BJ (cell line): ENCODE measurements at regions of chr13 and their contacts with region 1.

Region 1: GRCh38 chr13:99176309-99177276 is 24.1 kb upstream of the UBAC2 start:
- DNase-seq: no peak
- H3K4me3 ChIP-seq: no peak overlapping the region
- H3K27me3 ChIP-seq: peaks cover 4% of the 10 kb centered on the region
- CTCF ChIP-seq: peak; percentile 95

Region 2: DNA sequence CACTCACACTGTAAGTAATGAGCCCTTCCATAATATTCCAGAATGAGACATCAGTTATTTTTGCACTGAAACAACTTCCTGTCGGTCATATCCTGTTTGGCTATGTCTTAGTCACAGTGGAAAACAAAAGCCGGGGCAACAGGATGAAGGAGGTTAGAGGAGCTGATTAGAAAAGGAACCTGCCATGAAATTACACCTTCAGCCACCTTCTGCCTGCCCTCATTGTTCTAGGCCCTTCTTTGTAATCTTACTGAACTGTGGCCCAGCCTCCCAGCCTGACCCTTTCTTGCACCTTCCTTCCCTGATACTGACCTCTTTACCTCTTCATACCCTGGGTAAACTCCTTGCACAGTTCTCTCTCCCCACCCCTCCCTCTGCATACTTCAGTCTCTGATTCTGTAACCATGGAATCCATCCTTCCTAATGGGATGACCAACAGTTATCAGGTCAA is 266.1 kb before region 1 on chr13:
- CTCF ChIA-PET with region 1: no interaction called
- POLR2A ChIA-PET with region 1: no interaction called
- DNase-seq: no peak
- H3K4me3 ChIP-seq: no peak overlapping the region
- H3K27me3 ChIP-seq: no peaks in the 10 kb centered on the region
- CTCF ChIP-seq: no peak

Region 3: GRCh38 chr13:99103536-99103935 is 73.1 kb before region 1 on chr13:
- CTCF ChIA-PET with region 1: no interaction called
- POLR2A ChIA-PET with region 1: no interaction called
- DNase-seq: no peak
- H3K4me3 ChIP-seq: no peak overlapping the region
- H3K27me3 ChIP-seq: peaks cover 5% of the 10 kb centered on the region; the same call in 1 of the 2 replicates
- CTCF ChIP-seq: no peak

Region 4: DNA sequence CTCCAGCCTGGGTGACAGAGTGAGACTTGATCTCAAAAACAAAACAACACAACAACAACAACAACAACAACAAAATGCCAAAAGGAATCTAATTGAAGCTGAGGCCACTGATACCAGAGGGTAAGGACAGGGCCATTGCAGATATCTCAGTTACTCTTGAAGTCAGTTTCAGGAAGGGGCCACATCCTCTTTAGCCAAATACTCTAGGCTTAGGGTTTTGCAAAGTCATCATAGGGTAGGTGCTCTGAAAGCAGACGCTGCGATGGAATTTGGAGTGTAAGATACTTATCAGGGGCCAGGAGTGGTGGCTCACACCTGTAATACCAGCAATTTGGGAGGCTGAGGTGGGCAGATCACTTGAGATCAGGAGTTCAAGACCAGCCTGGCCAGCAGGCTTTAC is 22.5 kb before region 1 on chr13:
- CTCF ChIA-PET with region 1: interaction called, 15 read pairs
- POLR2A ChIA-PET with region 1: no interaction called
- DNase-seq: no peak
- H3K4me3 ChIP-seq: no peak overlapping the region
- H3K27me3 ChIP-seq: 0 out of 2 replicates have a peak, but pooled peaks cover 3% of the 10 kb centered on the region
- CTCF ChIP-seq: no peak

Region 5: GRCh38 chr13:99165753-99166587 is 10.6 kb before region 1 on chr13:
- CTCF ChIA-PET with region 1: interaction called, 16 read pairs
- POLR2A ChIA-PET with region 1: no interaction called
- DNase-seq: no peak
- H3K4me3 ChIP-seq: no peak overlapping the region
- H3K27me3 ChIP-seq: peaks cover 4% of the 10 kb centered on the region; the same call in 1 of the 2 replicates
- CTCF ChIP-seq: no peak

Region 6: DNA sequence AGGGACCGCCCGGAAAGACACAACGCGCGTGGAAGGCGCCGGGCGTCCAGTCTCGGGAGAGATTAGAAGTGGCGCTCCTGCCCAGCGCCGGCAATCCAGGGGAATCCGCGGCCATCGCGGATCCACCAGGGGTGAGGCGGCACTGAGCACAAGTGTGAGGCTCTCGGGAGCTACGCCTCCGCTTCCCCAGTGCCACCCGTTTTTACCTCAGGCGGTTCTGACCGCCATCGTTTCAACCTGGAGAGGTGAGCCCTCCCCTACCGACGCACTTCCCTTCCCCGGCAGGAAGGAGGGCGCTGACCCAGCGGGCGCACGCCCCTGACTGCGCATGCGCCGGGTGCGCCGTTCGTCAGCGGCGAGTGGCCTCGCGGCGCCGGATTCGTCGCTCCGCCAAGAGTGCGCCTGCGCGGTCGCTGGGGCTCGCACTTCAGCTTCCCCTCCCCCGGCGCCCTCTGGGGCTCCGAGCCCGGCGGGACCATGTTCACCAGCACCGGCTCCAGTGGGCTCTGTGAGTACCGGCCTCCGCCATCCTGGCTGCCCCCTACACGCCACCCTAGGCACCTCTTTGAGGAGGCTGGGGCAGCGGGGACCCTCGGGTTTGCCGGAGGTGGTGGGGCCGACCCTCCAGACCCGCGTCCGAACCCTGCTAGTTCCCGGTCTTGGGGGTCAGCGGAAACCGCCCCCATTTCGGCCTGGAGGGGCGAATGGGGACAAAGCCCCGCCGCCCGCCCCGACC is 24.0 kb after region 1 on chr13 and contains the start of gene UBAC2:
- CTCF ChIA-PET with region 1: interaction called, 20 read pairs
- POLR2A ChIA-PET with region 1: no interaction called
- DNase-seq: peak; percentile 57
- H3K4me3 ChIP-seq: peak within 1 kb of the TSS; percentile 97
- H3K27me3 ChIP-seq: no peaks in the 10 kb centered on the region
- CTCF ChIP-seq: 0 out of 2 replicates have a peak, but pooled peaks have one; percentile 21
- polyA plus RNA-seq, gene UBAC2: 84.7 and 87.8 TPM in 2 replicates

Region 7: DNA sequence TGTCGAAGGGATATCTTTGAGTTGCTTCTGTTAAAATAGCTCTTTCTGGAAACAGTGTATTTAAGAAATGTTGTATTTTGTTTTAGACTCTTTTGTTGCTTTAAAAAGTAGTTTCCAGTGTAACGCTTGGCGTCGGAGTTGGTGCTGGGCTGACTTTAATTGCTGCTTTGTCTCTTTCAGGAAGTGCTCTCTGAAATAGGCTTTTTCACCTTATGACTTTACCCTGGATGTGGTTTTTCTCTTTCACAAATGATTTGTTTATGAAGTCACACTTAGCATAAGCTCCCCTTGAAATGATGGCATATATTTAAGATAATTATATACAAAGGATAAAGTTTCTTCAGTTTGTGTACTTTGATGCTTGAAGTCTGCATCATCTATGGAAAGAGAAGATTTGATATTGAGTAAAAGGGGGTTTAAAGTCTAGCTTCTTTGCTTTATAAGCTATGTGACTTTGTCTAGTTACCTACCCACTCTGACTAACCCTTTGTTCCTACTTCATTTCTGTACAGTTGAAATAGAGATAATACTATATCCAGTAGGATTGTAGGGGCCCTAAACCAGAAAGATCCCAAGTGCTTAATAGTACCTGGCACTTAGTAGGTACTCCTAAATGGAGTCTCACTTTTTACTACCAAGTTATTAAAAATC is 81.7 kb after region 1 on chr13 and contains the start of gene GPR18:
- CTCF ChIA-PET with region 1: interaction called, 267 read pairs
- POLR2A ChIA-PET with region 1: no interaction called
- DNase-seq: no peak
- H3K4me3 ChIP-seq: no peak within 1 kb of the TSS
- H3K27me3 ChIP-seq: no peaks in the 10 kb centered on the region
- CTCF ChIP-seq: no peak
- polyA plus RNA-seq, gene GPR18: not detected in 2 replicates

Region 8: DNA sequence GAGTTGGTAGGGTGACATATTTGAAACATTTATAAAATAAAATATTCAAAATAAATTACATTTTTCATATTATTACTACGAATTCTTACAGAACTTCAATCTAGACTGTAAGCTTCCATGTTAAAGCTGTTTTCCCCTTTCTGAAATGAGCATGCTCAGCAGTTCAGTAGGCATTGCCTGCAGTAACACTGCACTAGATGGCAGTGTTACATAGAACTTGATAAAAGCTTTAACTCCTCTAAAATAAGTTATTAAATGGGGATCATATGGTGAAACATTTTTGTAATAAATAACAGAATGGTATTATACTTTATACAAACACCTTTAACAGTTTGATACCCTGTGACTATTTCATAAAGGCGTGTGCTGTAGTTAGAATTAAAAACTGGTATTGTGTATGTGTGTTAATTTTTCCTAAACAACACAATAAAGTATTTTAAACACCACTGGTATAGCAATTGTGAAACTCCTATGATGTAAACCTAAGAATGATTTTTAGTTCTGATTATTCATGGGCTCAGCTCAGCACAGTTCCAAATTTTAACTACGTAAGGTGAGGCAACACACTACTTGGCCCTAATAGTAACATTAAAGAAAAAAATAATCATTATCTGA is 93.1 kb after region 1 on chr13:
- CTCF ChIA-PET with region 1: interaction called, 267 read pairs
- POLR2A ChIA-PET with region 1: no interaction called
- DNase-seq: no peak
- H3K4me3 ChIP-seq: no peak overlapping the region
- H3K27me3 ChIP-seq: no peaks in the 10 kb centered on the region
- CTCF ChIP-seq: peak; percentile 74

Region 9: GRCh38 chr13:99275093-99275469 is 98.5 kb after region 1 on chr13:
- CTCF ChIA-PET with region 1: interaction called, 267 read pairs
- POLR2A ChIA-PET with region 1: no interaction called
- DNase-seq: no peak
- H3K4me3 ChIP-seq: no peak overlapping the region
- H3K27me3 ChIP-seq: no peaks in the 10 kb centered on the region
- CTCF ChIP-seq: no peak